Activated T-helper 1 cell treated with anti-CD3 and anti-CD28 coated beads, Interleukin-12 subunit alpha, Interleukin-12 subunit beta, Interleukin-2, Interleukin-4 antibody, amounts not matched to agents 30 ng/mL and 10 ng/mL and 1 ng/mL, durations not matched to agents 14 hours and 24 hours and 36 hours (primary cell): ENCODE measurements at regions of chr12 and their contacts with region 1.

Region 1: DNA sequence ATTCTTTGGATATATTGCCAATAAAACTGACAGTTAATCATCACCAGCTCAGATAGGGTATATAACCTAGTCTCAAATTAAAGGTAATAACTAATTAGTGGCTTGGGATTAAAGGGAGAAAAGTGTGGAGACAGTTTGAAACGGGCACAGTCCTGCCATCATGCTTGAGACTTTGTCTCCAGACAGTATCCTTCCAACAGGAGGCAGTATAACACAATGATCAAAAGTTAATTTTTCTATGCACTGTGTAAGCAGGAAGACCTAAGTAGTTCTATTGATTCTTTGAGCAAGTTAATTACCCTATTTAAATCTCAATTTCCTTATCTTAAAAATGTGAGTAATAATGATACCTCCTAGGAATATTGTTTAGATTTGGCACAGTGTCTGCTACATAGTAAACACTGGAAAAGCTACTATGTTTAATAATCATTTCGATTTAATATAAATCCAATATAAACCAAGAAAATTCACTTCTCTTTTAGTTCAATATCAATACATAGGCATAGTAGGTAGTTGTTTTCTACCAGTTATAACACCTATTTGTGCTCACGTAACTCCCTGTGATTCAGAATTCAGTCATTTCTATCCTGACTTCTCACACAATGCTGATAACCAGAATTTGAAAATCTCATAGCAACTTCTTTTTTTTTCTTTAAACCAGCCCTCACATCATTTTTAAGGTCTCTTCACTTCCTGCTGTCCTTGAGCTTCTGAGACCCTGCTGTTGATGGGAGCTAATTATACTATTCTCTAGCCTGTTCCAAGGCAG is 53.7 kb downstream of the GALNT4 start:
- DNase-seq: no peak
- H3K4me3 Mint-ChIP-seq: no peak overlapping the region
- H3K27ac Mint-ChIP-seq: peak overlapping the region; percentile 22
- H3K4me1 Mint-ChIP-seq: peaks cover 76% of the 10 kb centered on the region
- H3K27me3 Mint-ChIP-seq: no peaks in the 10 kb centered on the region

Region 2: DNA sequence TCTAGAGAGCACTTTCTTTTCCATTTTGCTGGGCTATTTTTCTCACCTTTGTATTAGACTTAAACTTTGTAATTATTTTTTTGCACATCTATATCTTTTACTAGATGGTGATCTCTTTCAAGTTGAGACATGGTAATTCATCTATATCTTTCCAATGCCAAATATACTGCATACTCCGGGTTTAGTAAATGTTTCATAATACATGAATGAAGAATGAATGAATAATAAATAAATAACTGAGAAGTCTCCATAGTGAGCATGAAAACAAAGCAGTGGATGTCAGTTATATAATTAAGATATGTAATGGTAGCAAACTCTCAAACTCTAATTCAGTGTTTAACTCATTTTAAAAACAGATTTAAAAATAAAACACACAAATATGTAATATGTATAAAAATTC is 548.1 kb before region 1 on chr12:
- intact Hi-C with region 1: no loop called
- DNase-seq: no peak
- H3K4me3 Mint-ChIP-seq: no peak overlapping the region
- H3K27ac Mint-ChIP-seq: no peak overlapping the region
- H3K4me1 Mint-ChIP-seq: no peaks in the 10 kb centered on the region
- H3K27me3 Mint-ChIP-seq: no peaks in the 10 kb centered on the region

Region 3: DNA sequence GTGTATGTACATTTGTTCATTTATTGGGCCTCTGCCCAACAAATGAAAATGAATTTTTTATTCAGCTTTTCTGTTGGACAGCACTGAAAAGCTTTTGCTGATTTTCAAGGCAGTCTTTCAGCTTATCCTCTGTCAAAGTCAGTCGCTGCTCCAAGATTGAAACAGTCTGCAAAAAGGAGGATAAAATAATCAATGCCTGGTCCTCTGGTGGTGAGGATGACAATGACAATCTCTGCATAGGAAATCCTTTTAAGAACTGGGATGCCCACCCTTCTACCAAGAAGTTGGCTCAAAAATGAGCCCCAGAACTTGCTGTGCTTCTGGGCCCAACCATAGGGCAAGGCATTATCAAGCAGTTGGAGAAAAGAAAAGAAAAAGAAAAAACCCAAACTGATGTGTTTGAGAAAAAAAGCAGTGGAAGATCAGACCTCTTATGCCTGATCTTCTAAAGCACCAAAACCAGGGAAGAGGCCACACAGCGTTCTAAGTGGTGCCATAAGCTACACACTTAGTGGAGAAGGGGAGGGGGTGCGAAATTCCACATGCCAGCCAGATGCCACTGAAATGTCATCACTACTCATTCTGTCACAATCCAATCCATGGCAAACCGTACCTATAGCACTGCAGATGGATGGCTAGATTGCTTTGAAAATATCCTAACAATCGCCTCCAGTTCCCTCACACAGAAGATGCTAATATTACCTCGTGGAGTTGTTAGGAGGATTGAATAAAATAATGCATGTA is 49.7 kb before region 1 on chr12:
- intact Hi-C with region 1: no loop called
- DNase-seq: no peak
- H3K4me3 Mint-ChIP-seq: no peak overlapping the region
- H3K27ac Mint-ChIP-seq: peak overlapping the region; percentile 42
- H3K4me1 Mint-ChIP-seq: peaks cover 16% of the 10 kb centered on the region
- H3K27me3 Mint-ChIP-seq: no peaks in the 10 kb centered on the region

Region 4: DNA sequence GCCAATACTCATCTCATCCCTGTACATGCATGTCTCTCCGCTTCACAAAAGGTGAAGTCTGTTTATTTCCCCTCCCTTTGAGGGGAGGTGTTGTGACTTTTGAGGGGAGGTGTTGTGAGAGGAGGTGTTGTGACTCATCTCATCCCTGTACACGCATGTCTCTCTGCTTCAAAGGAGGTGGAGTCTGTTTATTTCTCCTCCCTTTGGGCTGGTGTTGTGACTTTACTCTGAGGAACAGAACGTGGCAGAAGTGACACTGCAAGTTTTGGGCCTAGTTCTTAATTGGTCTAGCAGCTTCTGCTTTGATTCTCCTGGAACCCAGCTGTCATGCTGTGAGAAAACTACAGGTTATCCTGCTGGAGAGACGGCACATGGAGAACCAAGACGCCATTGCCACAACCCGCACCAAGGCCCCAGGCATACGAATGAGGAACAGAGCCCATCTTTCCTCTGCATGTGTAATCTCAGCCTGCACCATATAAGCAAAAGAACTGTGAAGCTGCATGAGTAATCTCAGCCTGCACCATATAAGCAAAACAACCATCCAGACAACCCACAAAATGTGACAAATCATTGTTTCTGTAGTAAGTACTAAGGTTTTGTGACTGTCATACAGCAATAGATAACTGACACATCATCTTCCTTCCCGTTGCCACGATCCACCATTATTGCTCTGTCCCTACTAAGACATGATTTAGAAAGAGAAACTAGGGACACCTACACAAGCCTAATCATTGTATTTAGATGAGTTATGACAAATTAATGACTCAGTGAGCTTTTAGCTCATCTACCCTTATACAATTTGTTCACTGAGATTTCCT is 23.7 kb after region 1 on chr12:
- intact Hi-C with region 1: loop called (anchors 1 kb)
- DNase-seq: peak; percentile 16
- H3K4me3 Mint-ChIP-seq: peak overlapping the region; percentile 50
- H3K27ac Mint-ChIP-seq: peak overlapping the region; percentile 92
- H3K4me1 Mint-ChIP-seq: peaks cover 34% of the 10 kb centered on the region
- H3K27me3 Mint-ChIP-seq: no peaks in the 10 kb centered on the region